ENCODE measurements at regions of chrX and their contacts with region 1.

Region 1: DNA sequence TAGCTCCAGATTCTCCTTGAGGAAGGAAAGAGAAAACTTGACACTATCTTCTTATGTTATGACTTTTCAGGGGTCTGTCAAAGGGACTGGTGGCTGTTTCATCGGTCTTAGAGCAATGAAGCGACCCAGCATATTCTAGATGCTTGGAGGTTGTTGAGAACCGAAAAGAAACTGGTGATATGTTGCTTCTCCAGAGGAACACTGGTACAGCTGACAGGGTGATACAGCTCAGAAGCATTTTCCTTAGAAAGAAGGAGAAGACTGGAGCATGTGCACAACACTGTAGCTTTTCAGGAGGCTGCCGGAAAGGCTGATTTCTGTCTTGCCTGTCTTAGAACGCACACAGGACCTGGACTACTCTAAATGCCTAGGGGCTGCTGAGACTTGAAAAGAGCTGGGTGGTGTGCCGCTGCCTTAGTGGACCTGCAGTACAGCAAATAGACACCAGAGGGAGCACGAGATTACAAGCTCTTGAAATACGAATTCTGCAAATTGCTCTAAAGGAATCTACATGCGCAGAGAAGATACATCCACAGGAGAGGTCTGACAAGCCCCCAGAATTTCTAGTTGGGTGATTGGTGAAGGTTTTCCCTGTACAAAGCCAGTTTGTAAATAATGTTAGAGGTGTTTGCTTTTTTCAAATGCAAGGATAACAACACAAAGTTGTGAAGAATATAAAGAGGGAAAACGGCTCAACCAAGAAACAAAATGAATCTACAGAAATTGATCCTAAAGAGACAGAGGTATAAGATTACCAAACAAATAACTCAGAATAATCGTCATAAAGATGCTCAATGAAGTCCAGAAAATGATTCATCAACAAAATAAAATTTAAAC is 223.1 kb upstream of the DMD start:
- DNase-seq: peak; percentile 31 to 75 (median 59)
- H3K4me3 ChIP-seq: no peak overlapping the region
- H3K27ac ChIP-seq: no peak overlapping the region
- H3K4me1 ChIP-seq: no peaks in the 10 kb centered on the region
- H3K27me3 ChIP-seq: peaks cover 13% of the 10 kb centered on the region
- CTCF ChIP-seq: peak; percentile 35 to 86 (median 74)
- POLR2A ChIP-seq: no peak

Region 2: DNA sequence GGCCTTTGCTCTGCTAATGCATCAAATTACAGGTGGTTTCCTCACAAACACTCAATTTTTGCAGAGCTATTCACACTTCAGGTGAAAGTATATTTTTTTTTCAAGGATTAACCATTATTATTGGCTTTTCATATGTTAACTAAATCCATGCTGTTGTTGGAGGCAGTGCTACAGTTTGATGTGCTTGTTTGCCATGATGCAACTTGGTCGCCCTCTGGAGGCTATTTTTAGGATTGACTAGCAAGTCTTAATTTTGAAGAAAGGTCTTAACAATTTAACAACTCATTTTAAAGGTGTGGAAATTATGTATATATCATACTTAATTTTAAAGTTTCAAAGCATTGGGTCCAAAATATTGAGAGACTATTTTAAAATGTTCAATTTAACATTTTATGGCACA is 866.4 kb after region 1 on chrX:
- intact Hi-C with region 1: loop called in 1 of 2 experiments (anchors 10 kb)
- DNase-seq: peak; percentile 24 to 53 (median 36)
- H3K4me3 ChIP-seq: no peak overlapping the region
- H3K27ac ChIP-seq: no peak overlapping the region
- H3K4me1 ChIP-seq: no peaks in the 10 kb centered on the region
- H3K27me3 ChIP-seq: peaks cover under 1% of the 10 kb centered on the region
- CTCF ChIP-seq: peak; percentile 36 to 68 (median 42)
- POLR2A ChIP-seq: no peak

Measured in adrenal gland (tissue), 19 donors.